ENCODE measurements at regions of chr1 and their contacts with region 1.

Region 1: GRCh38 chr1:37602750-37603694 is 7.3 kb upstream of the GNL2 start:
- DNase-seq: no peak
- ATAC-seq: peak; percentile 94
- H3K4me3 ChIP-seq: no peak overlapping the region
- H3K27ac ChIP-seq: no peak overlapping the region
- H3K4me1 ChIP-seq: no peaks in the 10 kb centered on the region
- H3K27me3 ChIP-seq: 0 out of 4 replicates have a peak, but pooled peaks cover 1 to 4% of the 10 kb centered on the region in 2 experiments
- CTCF ChIP-seq: peak; percentile 63 to 75 (median 70)
- EP300 ChIP-seq: no peak
- POLR2A ChIP-seq: no peak
- RAD21 ChIP-seq: peak; percentile 75

Region 2: DNA sequence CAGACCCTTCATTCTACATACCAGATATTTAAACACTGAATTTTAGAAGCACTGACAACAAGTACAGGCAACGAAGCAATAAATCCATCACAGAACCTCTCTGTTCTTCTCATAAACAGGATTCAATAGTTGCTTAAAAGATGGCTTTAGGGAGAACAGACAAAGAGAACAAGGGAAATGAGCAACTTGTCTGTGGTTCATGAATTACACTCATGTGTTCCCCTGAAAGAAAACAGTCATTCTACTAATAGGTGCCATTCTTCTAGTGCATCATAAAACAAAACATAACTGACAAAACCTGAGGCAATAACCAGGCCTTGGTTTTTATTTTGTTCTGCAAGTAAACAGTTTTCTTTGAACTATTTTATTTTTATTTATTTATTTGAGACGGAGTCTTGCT is 14.1 kb before region 1 on chr1:
- CTCF ChIA-PET with region 1: interaction called, 11 read pairs
- POLR2A ChIA-PET with region 1: no interaction called
- RAD21 ChIA-PET with region 1: no interaction called
- SMC1A ChIA-PET with region 1: interaction called, 5 read pairs
- in situ Hi-C with region 1: no loop called
- intact Hi-C with region 1: no loop called
- DNase-seq: no peak
- ATAC-seq: no peak
- H3K4me3 ChIP-seq: no peak overlapping the region
- H3K27ac ChIP-seq: no peak overlapping the region
- H3K4me1 ChIP-seq: no peaks in the 10 kb centered on the region; the same call in 1 of the 2 replicates
- H3K27me3 ChIP-seq: no peaks in the 10 kb centered on the region
- CTCF ChIP-seq: no peak
- EP300 ChIP-seq: no peak
- POLR2A ChIP-seq: no peak
- RAD21 ChIP-seq: no peak

Region 3: GRCh38 chr1:37676281-37677243 is 73.5 kb after region 1 on chr1:
- CTCF ChIA-PET with region 1: interaction called, 521 read pairs
- POLR2A ChIA-PET with region 1: no interaction called
- RAD21 ChIA-PET with region 1: interaction called, 105 read pairs
- SMC1A ChIA-PET with region 1: interaction called, 245 read pairs
- in situ Hi-C with region 1: loop called (anchors 5 kb)
- intact Hi-C with region 1: no loop called
- DNase-seq: peak; percentile 68
- ATAC-seq: peak; percentile 94
- H3K4me3 ChIP-seq: peak overlapping the region; percentile 28; the same call in 1 of the 2 replicates
- H3K27ac ChIP-seq: peak overlapping the region; percentile 93
- H3K4me1 ChIP-seq: peaks cover 27% of the 10 kb centered on the region
- H3K27me3 ChIP-seq: no peaks in the 10 kb centered on the region
- CTCF ChIP-seq: peak in 1 of 3 experiments; percentile 14; a peak in 2 of 6 replicates
- EP300 ChIP-seq: peak in 1 of 2 experiments; percentile 44; a peak in 1 of 4 replicates
- POLR2A ChIP-seq: no peak
- RAD21 ChIP-seq: peak; percentile 40; the same call in 1 of the 2 replicates

Measured in GM12878 (cell line).